ENCODE measurements at regions of chr12 and their contacts with region 1.

Region 1: GRCh38 chr12:123983822-123984485 is 10.9 kb downstream of the ZNF664 start:
- DNase-seq: peak in 34 of 35 experiments; percentile 11 to 81 (median 42)
- ATAC-seq: peak; percentile 55 to 87 (median 79)
- H3K4me3 ChIP-seq: no peak overlapping the region
- H3K4me3 Mint-ChIP-seq: no peak overlapping the region
- H3K27ac ChIP-seq: no peak overlapping the region
- H3K27ac Mint-ChIP-seq: no peak overlapping the region
- H3K4me1 ChIP-seq: no peaks in the 10 kb centered on the region
- H3K4me1 Mint-ChIP-seq: peaks cover 16 to 45% (median 21%) of the 10 kb centered on the region in 3 donors
- H3K27me3 ChIP-seq: no peaks in the 10 kb centered on the region
- H3K27me3 Mint-ChIP-seq: no peaks in the 10 kb centered on the region

Region 2: DNA sequence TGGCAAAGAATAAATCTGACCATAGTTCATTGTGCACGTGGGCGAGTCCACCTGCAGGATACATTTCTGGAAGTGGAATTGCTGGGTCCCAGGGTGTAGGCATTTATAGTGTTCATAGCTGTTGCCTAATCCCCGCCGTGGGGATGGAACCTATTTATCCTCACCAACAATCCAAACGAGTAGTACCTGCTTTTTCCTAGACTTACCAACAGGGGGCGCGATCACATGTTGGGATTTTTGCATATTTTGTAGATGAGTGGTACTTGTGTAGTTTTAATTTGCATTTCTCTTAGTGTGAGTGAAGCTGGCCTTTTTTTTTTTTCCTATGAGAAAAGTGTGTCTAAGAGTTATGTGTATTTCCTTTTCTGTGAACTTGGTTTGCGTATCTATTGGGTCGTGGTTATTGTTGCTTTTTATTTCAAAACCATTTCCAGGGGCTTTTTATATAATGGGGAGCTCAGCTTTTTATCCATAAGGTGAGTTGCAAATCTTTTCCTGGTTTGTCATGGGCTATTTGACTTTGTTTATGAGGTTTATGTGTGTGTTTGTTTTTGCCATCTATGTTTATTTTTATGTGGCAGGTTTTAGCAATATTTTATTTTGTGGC is 78.5 kb before region 1 on chr12:
- CTCF ChIA-PET with region 1: interaction called, 12 to 13 read pairs
- POLR2A ChIA-PET with region 1: no interaction called
- DNase-seq: peak; percentile 23 to 85 (median 54)
- ATAC-seq: peak; percentile 39 to 62 (median 52)
- H3K4me3 ChIP-seq: no peak overlapping the region
- H3K4me3 Mint-ChIP-seq: no peak overlapping the region
- H3K27ac ChIP-seq: no peak overlapping the region
- H3K27ac Mint-ChIP-seq: peak overlapping the region in 1 of 2 donors; percentile 17
- H3K4me1 ChIP-seq: peaks cover 0 to 4% of the 10 kb centered on the region in 2 experiments
- H3K4me1 Mint-ChIP-seq: peaks cover 9 to 15% (median 12%) of the 10 kb centered on the region in 3 donors
- H3K27me3 ChIP-seq: peaks cover 0 to 24% of the 10 kb centered on the region in 2 experiments
- H3K27me3 Mint-ChIP-seq: peaks cover 0 to 21% of the 10 kb centered on the region in 2 donors

Region 3: DNA sequence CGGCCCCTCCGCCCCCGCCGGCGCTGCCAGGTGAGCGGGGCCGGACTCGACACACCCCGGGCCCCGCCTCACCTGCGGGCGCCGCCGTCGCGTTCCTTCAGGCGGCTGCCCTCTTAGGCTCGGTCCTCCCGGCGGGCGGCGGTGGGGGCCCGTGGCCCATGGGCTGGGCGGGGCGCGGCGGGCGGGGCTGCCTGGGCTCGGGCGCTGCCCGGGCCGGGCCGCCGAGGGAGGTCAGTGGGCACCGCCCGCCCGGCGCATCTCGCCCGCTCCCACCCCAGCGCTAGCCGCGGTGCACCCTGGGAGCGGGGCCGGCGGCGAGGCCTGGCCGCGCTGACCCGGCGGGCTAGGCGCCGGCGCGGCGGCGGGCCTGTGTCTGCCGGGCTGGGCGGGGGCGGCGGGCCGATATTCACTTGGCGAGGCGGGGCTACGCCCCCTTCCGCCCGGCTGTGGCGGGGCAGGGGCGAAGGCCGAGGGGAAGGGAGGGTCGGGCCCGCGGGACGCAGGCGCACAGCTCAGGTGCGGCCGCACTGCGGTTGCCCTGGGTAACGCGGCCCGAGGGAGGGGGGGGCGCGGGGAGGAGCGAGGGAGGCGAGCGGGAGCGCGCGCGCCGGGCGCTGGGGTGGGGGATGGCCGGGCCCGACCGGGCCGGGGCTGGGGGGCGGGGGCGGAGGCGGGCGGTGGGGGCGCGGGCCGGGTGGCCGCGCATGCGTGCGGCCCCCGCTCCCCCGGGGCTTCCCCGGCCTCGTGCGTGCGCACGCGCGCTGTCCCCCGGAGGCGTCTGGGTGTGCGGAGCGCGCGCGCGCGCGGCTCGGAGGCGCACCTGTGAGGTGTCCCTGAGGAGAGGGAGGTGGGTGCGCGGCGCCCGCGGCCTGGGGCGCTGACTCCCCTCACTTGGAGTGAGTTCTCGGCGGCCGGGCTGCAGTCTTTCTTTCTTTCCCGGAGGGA is 11.2 kb before region 1 on chr12 and contains the starts of genes CCDC92 and ZNF664:
- CTCF ChIA-PET with region 1: interaction called, 4 read pairs
- POLR2A ChIA-PET with region 1: interaction called, 6 to 11 read pairs
- DNase-seq: peak; percentile 84 to 98 (median 90)
- ATAC-seq: peak; percentile 82 to 86 (median 82)
- H3K4me3 ChIP-seq: peak within 1 kb of the TSS; percentile 60 to 76
- H3K4me3 Mint-ChIP-seq: peak within 1 kb of the TSS; percentile 92 to 93 (median 93)
- H3K27ac ChIP-seq: peak within 1 kb of the TSS; percentile 16
- H3K27ac Mint-ChIP-seq: peak within 1 kb of the TSS; percentile 79 to 95
- H3K4me1 ChIP-seq: peaks cover 10 to 12% of the 10 kb centered on the region in 2 experiments
- H3K4me1 Mint-ChIP-seq: peaks cover 30 to 45% (median 33%) of the 10 kb centered on the region in 3 donors
- H3K27me3 ChIP-seq: no peaks in the 10 kb centered on the region
- H3K27me3 Mint-ChIP-seq: no peaks in the 10 kb centered on the region
- total RNA-seq, gene CCDC92: 22.1 to 44.9 (median 38.7) TPM
- total RNA-seq, gene ZNF664: 30.6 to 58.2 (median 56.1) TPM

Region 4: DNA sequence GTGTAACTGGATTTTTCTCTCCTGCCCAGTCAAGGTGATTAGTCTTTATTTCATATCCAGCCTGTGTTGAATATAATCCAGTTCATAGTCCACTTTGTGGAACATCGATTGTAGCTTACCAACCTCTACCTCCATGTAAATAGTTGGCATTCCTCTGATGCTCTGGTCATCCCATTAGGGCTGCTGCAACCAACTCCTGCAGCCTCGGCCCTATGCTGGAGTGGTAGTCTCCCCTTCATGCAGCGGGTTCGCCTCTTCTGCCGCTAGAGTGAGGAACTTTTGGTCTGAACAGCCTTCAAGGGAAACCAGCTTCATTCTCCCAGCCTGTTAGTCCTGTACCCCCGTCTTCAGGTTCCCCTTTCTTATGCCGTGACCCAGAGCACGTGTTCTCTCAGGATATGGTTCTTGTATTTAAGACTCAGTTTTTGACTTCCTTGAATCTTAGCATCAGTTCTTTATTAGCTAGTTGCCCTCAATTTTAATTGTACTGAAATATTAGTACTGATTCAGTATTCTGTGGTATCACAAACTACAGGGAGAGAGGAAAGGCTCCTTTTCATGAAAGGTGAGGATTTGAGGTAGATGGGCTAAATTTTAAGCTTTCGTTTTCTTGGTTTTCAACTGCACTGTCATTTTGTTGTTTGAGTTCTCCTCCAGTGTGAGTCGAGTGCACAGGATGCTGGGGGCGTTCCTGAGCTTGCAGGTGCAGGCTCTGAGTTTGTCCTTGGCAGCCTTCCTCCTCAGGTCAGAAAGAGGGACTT is 22.3 kb after region 1 on chr12:
- CTCF ChIA-PET with region 1: no interaction called
- POLR2A ChIA-PET with region 1: no interaction called
- DNase-seq: peak in 23 of 35 experiments; percentile 4 to 44 (median 22)
- ATAC-seq: peak; percentile 76 to 88 (median 80)
- H3K4me3 ChIP-seq: peak overlapping the region in 1 of 2 donors; percentile 51
- H3K4me3 Mint-ChIP-seq: peak overlapping the region; percentile 29 to 64 (median 48)
- H3K27ac ChIP-seq: peak overlapping the region; percentile 44
- H3K27ac Mint-ChIP-seq: peak overlapping the region; percentile 77 to 93
- H3K4me1 ChIP-seq: peaks cover 18 to 22% of the 10 kb centered on the region in 2 experiments
- H3K4me1 Mint-ChIP-seq: peaks cover 33 to 40% (median 33%) of the 10 kb centered on the region in 3 donors
- H3K27me3 ChIP-seq: no peaks in the 10 kb centered on the region
- H3K27me3 Mint-ChIP-seq: no peaks in the 10 kb centered on the region

Region 5: GRCh38 chr12:124115976-124116690 is 132.2 kb after region 1 on chr12:
- CTCF ChIA-PET with region 1: no interaction called
- POLR2A ChIA-PET with region 1: no interaction called
- DNase-seq: no peak
- ATAC-seq: no peak
- H3K4me3 ChIP-seq: no peak overlapping the region
- H3K4me3 Mint-ChIP-seq: no peak overlapping the region
- H3K27ac ChIP-seq: no peak overlapping the region
- H3K27ac Mint-ChIP-seq: no peak overlapping the region
- H3K4me1 ChIP-seq: no peaks in the 10 kb centered on the region
- H3K4me1 Mint-ChIP-seq: no peaks in the 10 kb centered on the region
- H3K27me3 ChIP-seq: peaks cover 0 to 18% of the 10 kb centered on the region in 2 experiments
- H3K27me3 Mint-ChIP-seq: peaks cover 0 to 15% of the 10 kb centered on the region in 2 donors